Heart right ventricle (tissue), 16 donors: ENCODE measurements at regions of chr1 and their contacts with region 1.

Region 1: GRCh38 chr1:38990738-38991639 is at the start of gene AKIRIN1:
- DNase-seq: peak; percentile 98 to 100
- ATAC-seq: peak; percentile 97 to 99 (median 98)
- H3K4me3 ChIP-seq: peak within 1 kb of the TSS; percentile 77 to 99 (median 94)
- H3K27ac ChIP-seq: peak within 1 kb of the TSS; percentile 81 to 98 (median 97)
- H3K4me1 ChIP-seq: peaks cover 0 to 44% (median 28%) of the 10 kb centered on the region in 9 donors
- H3K27me3 ChIP-seq: no peaks in the 10 kb centered on the region
- CTCF ChIP-seq: peak in 8 of 9 donors; percentile 10 to 55 (median 46)
- total RNA-seq, gene AKIRIN1: 47.3 to 73.8 (median 58.8) TPM

Region 2: DNA sequence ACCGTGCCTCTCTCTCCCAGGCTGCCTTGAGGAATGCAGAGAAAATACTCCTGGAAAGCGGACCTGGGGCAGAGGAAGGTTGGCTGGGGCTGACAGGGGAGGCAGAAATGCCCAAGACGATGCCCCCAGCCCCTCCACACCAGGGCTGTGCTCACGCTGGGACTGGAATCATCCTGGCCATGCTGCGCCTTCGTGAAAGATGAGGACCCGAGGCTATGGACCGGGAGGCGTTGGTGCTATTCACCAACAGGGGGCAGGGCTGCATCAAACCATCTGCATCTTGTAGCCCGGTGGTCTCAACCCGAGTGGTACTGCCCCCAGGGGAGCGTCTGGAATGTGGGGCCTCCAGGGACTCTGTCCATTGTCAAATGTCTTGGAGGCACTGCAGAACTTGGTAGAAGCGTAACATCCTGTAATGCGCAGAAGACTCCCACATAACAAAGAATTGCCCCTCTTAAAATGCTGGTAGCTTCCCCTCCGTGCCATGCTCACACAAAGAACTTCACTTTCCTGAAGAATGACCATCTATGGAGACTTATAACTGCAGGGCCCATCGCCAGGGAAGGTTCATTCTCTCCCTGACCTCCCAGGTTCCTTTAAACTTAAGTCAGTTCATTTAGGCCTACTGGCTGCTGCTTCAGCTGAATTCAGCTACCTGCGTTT is 382.7 kb before region 1 on chr1:
- intact Hi-C with region 1: no loop called
- DNase-seq: peak; percentile 16 to 36
- ATAC-seq: peak in 1 of 8 donors; percentile 72
- H3K4me3 ChIP-seq: no peak overlapping the region
- H3K27ac ChIP-seq: no peak overlapping the region
- H3K4me1 ChIP-seq: no peaks in the 10 kb centered on the region
- H3K27me3 ChIP-seq: peaks cover 0 to 57% (median 17%) of the 10 kb centered on the region in 7 donors
- CTCF ChIP-seq: peak in 8 of 9 donors; percentile 18 to 71 (median 59)

Region 3: DNA sequence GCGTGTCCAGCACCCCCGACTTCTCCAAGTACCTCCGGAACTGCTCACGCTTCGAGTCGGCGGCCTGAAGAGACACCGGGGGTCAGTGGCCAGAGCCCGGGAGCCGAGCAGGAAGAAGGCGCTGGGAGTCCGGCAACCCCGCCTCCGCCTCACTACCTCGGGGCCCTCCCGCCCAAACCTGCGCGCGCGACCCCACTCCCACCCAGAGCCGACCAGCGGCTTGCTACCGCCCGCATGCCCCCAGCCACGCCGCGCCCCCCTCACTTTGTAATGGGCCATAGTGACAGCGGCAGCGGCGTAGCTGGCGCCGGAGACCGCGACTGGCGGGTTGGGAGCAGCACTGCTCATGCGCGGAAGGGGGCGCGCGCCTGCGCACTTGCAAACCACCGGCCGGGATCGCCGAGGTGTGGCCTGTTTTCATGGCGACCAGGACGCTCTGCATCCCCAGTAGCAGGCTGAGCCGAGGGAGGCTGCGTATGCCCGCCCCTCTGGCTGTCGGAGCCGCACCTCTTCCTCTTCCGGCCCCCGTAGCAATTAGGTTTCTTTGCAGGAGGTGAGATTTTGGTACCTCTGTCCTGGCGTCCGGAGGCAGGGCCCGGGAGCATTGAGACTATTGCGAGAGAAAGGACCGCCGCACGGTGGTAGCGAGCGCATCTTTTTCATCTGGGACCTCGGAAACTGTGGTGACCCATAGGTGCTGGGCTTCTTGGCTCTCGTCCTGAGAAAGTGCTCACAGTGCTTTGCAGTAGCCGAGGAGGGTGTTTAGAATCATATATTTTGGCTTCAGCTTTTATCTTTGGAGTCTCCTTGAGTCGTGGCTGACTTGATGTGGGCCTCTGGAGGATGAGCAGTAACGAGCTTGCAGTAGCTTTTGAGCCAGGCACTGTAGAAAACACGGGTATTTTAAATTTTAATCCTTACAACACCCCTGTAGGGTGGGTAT is 117.7 kb before region 1 on chr1 and contains the start of gene MYCBP:
- intact Hi-C with region 1: loop called in 7 of 10 experiments (anchors 5 to 10 kb)
- DNase-seq: peak; percentile 95 to 97
- ATAC-seq: peak; percentile 99 to 100 (median 100)
- H3K4me3 ChIP-seq: peak within 1 kb of the TSS; percentile 50 to 96 (median 82)
- H3K27ac ChIP-seq: peak within 1 kb of the TSS in 9 of 10 donors; percentile 56 to 86 (median 73)
- H3K4me1 ChIP-seq: peaks cover 5 to 35% (median 24%) of the 10 kb centered on the region in 9 donors
- H3K27me3 ChIP-seq: no peaks in the 10 kb centered on the region
- CTCF ChIP-seq: peak in 6 of 9 donors; percentile 14 to 44 (median 28)
- total RNA-seq, gene MYCBP: 5.4 to 22.8 (median 8.2) TPM

Region 4: DNA sequence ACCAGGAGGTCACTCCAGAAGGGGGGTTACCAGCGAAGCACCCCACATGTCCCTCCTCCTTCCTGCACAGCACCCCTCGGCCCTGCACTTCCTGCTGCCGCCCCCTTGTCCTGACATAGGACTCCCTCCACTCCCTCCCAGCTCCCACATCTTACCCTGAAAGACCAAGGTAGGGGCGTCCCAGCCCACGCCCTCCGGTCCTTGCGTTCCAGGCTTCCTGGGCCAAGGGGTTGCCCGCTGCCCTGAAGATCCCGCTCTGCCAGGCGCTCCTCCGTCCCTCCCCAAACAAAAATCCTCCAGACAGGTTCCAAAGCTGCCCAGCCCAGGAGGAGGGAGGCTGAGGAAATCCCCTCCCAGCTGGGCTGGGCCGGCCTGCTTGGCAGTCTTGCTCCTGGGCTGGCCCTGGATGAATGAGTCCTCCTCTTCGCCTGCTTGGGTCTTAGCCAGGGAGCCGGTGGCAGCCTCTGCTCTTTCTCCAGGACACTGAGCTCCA is 49.4 kb before region 1 on chr1 and contains the start of gene RHBDL2:
- intact Hi-C with region 1: loop called in 1 of 10 experiments (anchors 5 kb)
- DNase-seq: peak; percentile 71 to 72
- ATAC-seq: peak; percentile 82 to 95 (median 94)
- H3K4me3 ChIP-seq: peak within 1 kb of the TSS in 9 of 10 donors; percentile 5 to 57 (median 50)
- H3K27ac ChIP-seq: no peak within 1 kb of the TSS
- H3K4me1 ChIP-seq: peaks cover 0 to 16% (median 9%) of the 10 kb centered on the region in 9 donors
- H3K27me3 ChIP-seq: no peaks in the 10 kb centered on the region
- CTCF ChIP-seq: no peak
- total RNA-seq, gene RHBDL2: 0.11 to 0.37 TPM in 2 of 10 donors, not detected in the others

Region 5: DNA sequence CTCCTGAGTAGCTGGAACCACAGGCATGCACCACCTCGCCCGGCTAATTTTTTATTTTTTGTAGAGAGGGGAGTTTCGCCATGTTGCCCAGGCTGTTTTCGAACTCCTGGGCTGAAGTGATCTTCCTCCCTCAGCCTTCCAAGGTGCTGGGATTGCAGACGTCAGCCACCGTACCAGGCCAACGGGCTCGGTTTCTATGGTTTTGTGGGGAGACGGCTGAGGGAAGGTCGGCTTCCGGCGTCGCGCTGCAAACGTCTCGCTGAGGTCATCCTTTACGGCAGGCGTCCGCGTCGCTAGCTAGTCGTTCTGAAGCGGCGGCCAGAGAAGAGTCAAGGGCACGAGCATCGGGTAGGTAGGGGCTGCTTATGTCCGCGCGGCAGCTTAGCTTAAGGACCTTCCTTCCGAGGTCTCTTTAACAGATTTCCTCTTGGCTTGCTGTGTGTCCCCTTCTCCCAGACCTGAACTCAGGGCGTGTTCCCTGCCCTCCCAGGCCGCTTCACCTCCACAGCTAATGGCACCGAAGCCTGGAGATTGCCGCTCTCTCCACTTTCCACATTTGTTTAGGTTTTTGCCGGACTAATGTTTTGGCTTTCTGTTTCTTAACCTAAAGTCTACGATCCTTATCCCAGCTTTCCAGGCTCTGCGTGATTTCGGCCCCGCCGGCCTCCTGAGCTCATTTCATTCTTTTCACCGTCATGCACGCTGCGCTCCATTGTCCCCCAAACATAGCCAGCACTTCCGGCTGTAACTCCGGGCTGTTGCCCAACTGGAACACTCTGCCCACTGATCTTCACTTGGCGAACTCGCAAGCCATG is 35.3 kb after region 1 on chr1 and contains the start of gene NDUFS5:
- intact Hi-C with region 1: loop called in 2 of 10 experiments (anchors 5 kb)
- DNase-seq: peak; percentile 88 to 91
- ATAC-seq: peak; percentile 94 to 98 (median 96)
- H3K4me3 ChIP-seq: peak within 1 kb of the TSS; percentile 62 to 86 (median 75)
- H3K27ac ChIP-seq: peak within 1 kb of the TSS; percentile 89 to 99 (median 95)
- H3K4me1 ChIP-seq: peaks cover 3 to 35% (median 19%) of the 10 kb centered on the region in 9 donors
- H3K27me3 ChIP-seq: no peaks in the 10 kb centered on the region
- CTCF ChIP-seq: no peak
- total RNA-seq, gene NDUFS5: 303 to 646 (median 513) TPM

Region 6: GRCh38 chr1:39214998-39215873 is 224.2 kb after region 1 on chr1:
- intact Hi-C with region 1: no loop called
- DNase-seq: peak in 1 of 2 donors; percentile 38
- ATAC-seq: peak; percentile 55 to 69 (median 65)
- H3K4me3 ChIP-seq: peak overlapping the region in 9 of 10 donors; percentile 11 to 51 (median 31)
- H3K27ac ChIP-seq: peak overlapping the region; percentile 48 to 89 (median 81)
- H3K4me1 ChIP-seq: peaks cover 11 to 88% (median 70%) of the 10 kb centered on the region in 9 donors
- H3K27me3 ChIP-seq: no peaks in the 10 kb centered on the region
- CTCF ChIP-seq: no peak